OCI-LY7 (cell line): ENCODE measurements at regions of chrX and their contacts with region 1.

Region 1: DNA sequence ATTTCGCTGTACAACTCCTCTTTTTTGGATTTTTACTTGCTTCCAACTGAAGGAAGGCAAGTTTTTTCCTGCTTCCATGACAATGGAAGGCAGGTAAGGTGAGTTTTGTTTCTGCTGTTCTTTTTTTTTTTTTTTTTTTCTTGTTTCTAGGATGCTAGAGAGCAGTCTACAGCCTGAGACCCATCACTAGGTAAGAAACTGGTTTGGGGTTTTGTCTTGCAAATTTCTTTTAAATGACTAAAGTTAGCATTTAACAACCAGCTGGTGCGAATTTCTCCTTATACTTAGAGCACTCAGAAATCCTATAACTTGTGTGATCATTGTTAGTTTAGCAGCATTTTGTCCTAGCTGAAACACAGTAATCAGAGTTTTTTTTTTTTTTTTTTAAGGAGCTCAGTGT is 378.4 kb upstream of the CNKSR2 start:
- DNase-seq: no peak
- H3K4me3 ChIP-seq: no peak overlapping the region
- H3K27ac ChIP-seq: no peak overlapping the region
- H3K4me1 ChIP-seq: no peaks in the 10 kb centered on the region
- CTCF ChIP-seq: no peak

Region 2: DNA sequence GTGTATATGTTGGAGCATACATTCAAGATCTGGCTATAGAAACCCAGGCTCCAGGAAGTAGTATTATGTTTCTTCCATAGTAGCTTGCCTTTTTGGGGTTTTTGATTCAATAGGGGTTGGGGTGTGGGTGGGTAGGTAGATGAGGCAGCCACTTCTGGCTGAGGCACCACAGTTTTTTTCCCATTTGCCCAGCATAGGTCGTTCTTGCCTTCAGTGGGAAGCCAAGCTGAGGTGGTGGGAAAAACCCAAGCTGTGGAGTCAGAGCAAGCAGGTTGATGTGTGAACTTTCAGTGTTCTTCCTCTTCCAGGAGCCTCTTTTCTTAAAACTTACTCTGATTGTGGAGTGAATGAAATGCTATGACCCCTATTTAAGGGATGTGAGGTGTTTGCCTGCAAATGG is 662.2 kb before region 1 on chrX:
- CTCF ChIA-PET with region 1: no interaction called
- POLR2A ChIA-PET with region 1: no interaction called
- intact Hi-C with region 1: no loop called
- DNase-seq: no peak
- H3K4me3 ChIP-seq: no peak overlapping the region
- H3K27ac ChIP-seq: no peak overlapping the region
- H3K4me1 ChIP-seq: no peaks in the 10 kb centered on the region
- CTCF ChIP-seq: no peak

Region 3: GRCh38 chrX:20746690-20747089 is 249.1 kb before region 1 on chrX:
- CTCF ChIA-PET with region 1: no interaction called
- POLR2A ChIA-PET with region 1: interaction called, 12 read pairs
- intact Hi-C with region 1: no loop called
- DNase-seq: no peak
- H3K4me3 ChIP-seq: no peak overlapping the region
- H3K27ac ChIP-seq: no peak overlapping the region
- H3K4me1 ChIP-seq: no peaks in the 10 kb centered on the region
- CTCF ChIP-seq: no peak

Region 4: GRCh38 chrX:21158678-21159077 is 162.8 kb after region 1 on chrX:
- CTCF ChIA-PET with region 1: no interaction called
- POLR2A ChIA-PET with region 1: no interaction called
- intact Hi-C with region 1: no loop called
- DNase-seq: no peak
- H3K4me3 ChIP-seq: no peak overlapping the region
- H3K27ac ChIP-seq: no peak overlapping the region
- H3K4me1 ChIP-seq: no peaks in the 10 kb centered on the region
- CTCF ChIP-seq: no peak